ENCODE measurements at regions of chr15 and their contacts with region 1.

Region 1: DNA sequence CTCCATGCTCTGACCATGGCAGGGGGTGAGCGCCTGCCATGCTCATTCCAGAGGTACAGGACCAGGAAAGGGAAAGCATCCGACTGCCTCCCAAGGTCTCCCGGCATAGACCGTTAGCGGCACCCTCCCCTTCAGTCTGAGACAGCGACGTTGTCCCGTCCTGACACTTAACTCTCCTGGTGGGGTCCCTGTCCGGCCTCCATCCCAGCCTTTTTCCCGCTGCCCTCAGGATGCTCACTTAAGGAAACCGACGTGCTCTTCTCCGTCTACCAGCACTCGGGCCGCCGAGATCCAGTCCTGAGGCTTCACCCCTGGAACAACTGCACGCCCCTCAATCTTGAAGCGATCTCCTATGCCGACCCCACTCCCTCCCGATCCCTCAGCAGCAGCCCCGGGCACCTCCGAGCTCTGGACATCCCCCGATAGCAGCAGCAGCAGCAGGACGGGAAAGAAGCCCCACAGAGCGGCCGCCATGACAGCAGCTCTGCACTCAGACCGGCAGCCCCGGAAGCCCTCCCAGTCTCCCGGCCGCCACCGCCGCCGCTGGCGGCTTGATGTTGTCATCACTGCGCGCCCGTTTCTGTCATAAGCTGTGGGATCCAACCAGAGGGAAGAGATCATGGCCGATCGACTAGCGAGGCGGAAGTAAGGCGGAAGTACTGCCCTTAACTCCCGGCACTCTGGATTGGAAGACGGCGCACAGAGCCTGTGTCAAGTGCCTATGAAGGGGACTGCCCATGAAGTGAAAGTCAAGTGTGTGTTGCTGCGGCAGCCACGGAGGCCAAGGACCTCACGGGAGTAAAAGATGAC is at the starts of genes EMC7 and PGBD4:
- DNase-seq: peak; percentile 100
- H3K4me3 Mint-ChIP-seq: peak within 1 kb of the TSS; percentile 100
- H3K27ac Mint-ChIP-seq: peak within 1 kb of the TSS; percentile 100
- H3K4me1 Mint-ChIP-seq: peaks cover 30% of the 10 kb centered on the region
- H3K27me3 Mint-ChIP-seq: peaks cover 2% of the 10 kb centered on the region
- total RNA-seq, gene EMC7: 70.9 and 75.8 TPM in 2 replicates
- total RNA-seq, gene PGBD4: 3.7 and 4.0 TPM in 2 replicates

Region 2: DNA sequence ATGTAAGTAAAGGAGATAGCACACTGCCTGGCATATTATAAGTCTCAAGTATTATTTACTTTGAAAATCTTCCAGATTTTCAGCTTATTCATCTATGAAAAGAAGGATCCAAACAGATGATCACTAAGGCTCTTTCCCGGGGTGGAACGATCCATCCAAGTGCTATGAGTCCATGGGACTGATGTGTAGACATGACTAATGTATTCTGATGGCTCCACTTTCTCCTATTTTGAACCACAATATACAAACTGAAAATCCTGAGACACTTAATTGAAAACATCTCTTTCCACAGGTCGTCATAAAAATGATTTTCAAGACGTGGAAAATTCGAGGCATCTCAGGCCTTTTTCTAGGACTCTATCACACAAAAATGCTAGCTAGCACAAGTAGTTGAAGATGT is 166.7 kb before region 1 on chr15:
- intact Hi-C with region 1: no loop called
- DNase-seq: no peak
- H3K4me3 Mint-ChIP-seq: no peak overlapping the region
- H3K27ac Mint-ChIP-seq: no peak overlapping the region
- H3K4me1 Mint-ChIP-seq: no peaks in the 10 kb centered on the region
- H3K27me3 Mint-ChIP-seq: no peaks in the 10 kb centered on the region

Region 3: DNA sequence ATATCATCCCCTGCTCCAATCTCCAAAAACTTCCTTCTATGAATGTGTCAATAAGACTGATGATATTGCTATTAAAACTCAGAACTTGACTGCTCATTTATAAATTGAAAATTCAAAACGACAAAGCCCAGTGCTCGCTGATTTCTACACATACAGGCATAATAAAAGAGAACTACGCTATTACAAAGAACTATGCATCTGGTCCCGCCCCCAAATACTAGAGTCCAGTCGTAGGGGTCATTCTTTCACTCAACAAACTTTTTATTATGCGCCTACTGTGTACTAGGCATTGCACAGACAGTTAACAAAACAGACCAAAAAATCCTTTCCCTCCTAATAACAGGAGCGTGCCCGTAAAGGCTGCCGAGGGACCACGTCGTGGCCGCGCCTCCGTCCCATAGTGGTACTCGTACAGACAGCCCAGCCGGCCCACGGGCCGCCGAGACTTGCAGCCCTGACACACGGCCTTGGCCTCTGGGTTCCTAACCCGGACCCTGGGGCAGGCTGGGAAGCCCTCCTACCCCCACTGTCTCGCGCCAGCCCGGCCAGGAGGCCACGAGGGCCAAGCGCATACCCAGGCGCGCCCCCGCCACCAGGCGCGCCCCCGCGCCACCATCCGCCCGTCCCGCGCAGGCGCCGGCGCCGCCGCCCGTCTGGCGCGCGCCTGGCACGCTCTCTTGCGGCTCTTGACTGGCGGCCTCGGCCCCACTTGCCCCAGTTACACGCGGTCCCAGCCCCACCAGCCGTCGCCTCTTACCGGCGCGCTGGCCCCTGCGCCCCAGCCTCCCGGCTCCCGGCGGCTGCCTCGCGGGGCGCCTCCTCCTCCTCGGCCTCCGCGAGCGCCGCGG is 63.3 kb before region 1 on chr15:
- intact Hi-C with region 1: loop called (anchors 1 kb)
- DNase-seq: peak; percentile 90
- H3K4me3 Mint-ChIP-seq: peak overlapping the region; percentile 88
- H3K27ac Mint-ChIP-seq: peak overlapping the region; percentile 94
- H3K4me1 Mint-ChIP-seq: peaks cover 23% of the 10 kb centered on the region
- H3K27me3 Mint-ChIP-seq: no peaks in the 10 kb centered on the region

Region 4: DNA sequence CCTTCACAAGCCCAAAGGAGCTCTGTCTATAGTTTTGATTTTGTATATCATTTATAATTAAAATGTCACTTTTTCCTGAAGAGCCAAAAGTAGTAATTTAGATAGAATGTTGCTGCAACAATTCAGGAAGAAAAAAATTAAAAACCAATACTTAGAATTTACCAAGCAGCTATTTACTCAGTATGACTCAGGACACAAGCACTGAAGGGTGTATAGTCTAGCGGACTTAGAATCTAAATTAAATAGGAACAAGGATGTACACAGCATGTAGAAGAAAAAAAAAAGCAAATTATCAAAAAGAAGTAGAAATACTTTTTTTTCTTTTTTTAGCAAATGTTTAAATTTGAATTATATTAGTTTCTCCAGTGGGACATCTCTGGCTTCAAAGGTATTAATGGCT is 31.9 kb after region 1 on chr15:
- intact Hi-C with region 1: no loop called
- DNase-seq: no peak
- H3K4me3 Mint-ChIP-seq: no peak overlapping the region
- H3K27ac Mint-ChIP-seq: no peak overlapping the region
- H3K4me1 Mint-ChIP-seq: no peaks in the 10 kb centered on the region
- H3K27me3 Mint-ChIP-seq: no peaks in the 10 kb centered on the region

Region 5: DNA sequence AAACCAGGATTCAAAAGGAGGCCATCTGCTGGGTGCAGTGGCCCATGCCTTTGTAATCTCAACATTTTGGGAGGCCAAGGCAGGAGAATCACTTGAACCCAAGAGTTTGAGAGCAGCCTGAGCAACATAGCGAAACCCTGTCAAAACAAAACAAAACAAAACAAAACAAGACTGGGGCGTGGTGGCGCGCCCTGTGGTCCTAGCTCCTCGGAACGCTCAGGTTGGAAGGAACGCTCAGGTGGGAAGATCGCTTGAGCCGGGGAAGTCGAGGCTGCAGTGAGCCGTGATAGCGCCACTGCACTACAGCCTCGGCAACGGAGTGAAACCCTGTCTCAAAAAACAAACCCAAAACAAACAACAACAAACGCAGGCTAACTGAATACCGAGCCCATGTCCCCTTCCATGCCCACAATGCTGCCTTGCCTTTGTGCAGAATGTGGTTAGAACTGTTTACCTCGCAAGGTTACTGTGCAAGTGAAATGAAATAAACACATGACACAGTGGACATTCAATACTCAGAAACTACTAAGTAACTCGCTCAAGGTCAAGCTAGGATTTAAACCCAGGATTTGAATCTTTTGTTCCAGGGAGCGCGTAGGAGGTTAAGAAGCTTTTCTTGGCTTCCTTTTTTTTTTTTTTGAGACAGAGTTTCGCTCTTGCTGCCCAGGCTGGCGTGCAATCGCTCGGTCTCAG is 122.5 kb after region 1 on chr15:
- intact Hi-C with region 1: loop called (anchors 1 kb)
- DNase-seq: peak; percentile 60
- H3K4me3 Mint-ChIP-seq: peak overlapping the region; percentile 95
- H3K27ac Mint-ChIP-seq: peak overlapping the region; percentile 89
- H3K4me1 Mint-ChIP-seq: peaks cover 26% of the 10 kb centered on the region
- H3K27me3 Mint-ChIP-seq: no peaks in the 10 kb centered on the region

Region 6: DNA sequence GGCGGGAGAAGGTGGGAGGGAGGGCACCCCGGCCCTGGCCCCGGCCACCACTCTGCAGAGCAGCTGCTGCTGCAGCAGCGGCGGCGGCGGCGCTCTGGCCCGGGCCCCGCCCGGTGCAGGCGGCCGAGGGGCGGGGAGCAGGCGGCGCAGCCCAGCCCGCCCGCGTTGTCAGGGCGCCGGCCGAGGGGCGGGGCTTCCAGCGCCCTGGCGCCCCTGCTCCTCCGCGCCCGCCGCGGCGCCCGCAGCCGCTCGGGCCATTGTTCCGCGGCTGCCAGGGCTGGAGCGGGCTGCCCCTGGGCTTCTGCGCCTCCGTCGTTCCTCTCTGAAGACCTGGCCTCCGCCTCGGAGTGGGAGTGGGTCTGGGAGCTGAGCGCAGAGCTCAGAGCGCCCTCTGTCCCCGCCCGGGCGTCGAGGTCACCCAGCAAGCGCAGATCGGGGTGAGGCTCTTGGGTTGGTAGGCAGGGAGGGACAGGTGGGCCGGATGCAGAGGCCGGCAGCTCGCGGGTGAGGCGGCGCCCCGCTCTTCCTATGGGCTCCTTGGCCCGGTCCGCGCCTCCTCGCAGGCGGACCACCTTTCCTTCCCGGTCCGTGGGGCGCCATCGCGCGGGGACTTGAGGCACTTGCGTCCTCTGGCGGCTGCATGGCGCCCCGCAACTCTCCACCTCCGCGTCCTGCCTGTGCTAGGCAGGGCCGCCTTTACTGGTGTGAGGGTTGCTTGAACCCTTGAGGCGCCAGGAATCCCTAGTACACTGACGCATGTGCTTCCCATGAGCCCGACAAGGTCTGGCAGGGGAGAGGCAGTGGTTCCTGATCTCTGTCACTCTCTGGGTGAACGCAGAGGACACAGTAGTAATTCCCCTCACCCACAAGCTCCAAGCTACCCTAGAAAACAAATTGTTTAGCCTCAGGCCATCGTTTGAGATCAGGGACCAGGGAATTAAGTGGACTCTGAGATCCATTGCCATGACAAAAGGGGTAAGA is 265.8 kb after region 1 on chr15 and contains the start of gene LPCAT4:
- intact Hi-C with region 1: loop called (anchors 10 kb)
- DNase-seq: peak; percentile 97
- H3K4me3 Mint-ChIP-seq: peak within 1 kb of the TSS; percentile 99
- H3K27ac Mint-ChIP-seq: peak within 1 kb of the TSS; percentile 98
- H3K4me1 Mint-ChIP-seq: peaks cover 38% of the 10 kb centered on the region
- H3K27me3 Mint-ChIP-seq: peaks cover 1% of the 10 kb centered on the region
- total RNA-seq, gene LPCAT4: 63.9 and 67.3 TPM in 2 replicates

Region 7: DNA sequence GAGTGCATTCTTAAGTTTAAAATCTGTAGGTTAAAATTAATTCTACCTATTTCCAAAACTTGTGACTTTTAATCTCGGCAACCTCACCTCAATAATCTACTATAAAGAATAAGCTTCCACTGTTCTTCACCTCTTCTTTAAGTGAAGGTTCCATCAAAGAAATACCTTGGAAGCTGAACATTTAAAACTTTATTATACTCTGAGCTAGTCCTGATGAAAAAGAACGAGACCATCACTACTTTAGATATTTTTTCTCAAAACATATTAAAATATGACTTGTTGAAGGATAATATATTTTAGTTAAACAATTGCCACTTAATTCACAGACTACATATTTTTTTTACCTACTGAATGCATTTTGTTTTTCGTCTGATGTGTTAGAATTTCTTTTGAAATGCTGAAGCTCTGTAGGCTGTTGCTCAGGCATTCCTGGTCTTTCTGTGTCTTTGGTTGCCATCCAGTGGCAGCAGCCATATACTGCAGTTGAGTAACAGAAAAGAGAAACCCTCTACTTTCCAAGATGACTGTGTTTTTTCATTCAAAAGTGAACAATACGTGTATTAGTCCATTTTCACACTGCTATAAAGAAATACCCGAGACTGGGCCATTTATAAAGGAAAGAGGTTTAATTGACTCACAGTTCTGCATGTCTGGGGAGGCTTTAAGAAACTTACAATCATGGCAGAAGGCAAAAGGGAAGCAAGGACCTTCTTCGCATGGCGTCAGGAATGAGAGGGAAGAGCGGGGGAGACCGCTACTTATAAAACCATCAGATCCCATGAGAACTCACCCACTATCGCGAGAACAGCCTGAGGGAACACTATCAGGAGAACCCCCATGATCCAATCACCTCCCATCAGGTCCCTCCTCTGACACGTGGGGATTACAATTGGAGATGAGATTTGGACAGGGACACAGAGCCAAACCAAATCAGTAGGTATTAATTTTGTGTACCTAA is 486.4 kb after region 1 on chr15:
- intact Hi-C with region 1: loop called (anchors 5 kb)
- DNase-seq: peak; percentile 89
- H3K4me3 Mint-ChIP-seq: peak overlapping the region; percentile 86
- H3K27ac Mint-ChIP-seq: peak overlapping the region; percentile 64
- H3K4me1 Mint-ChIP-seq: peaks cover 18% of the 10 kb centered on the region
- H3K27me3 Mint-ChIP-seq: peaks cover 24% of the 10 kb centered on the region

Measured in activated CD4-positive, alpha-beta T cell treated with anti-CD3 and anti-CD28 coated beads, Interleukin-2, amount 10 ng/mL, durations not matched to agents 24 days and 14 days (primary cell).